ENCODE measurements at regions of chr22 and their contacts with region 1.

Region 1: GRCh38 chr22:45688606-45689080 is 17.0 kb downstream of the ATXN10 start:
- DNase-seq: peak; percentile 75
- H3K4me3 Mint-ChIP-seq: peak overlapping the region; percentile 24
- H3K27ac Mint-ChIP-seq: peak overlapping the region; percentile 85
- H3K4me1 Mint-ChIP-seq: peaks cover 66% of the 10 kb centered on the region
- H3K27me3 Mint-ChIP-seq: no peaks in the 10 kb centered on the region
- CTCF ChIP-seq: no peak

Region 2: DNA sequence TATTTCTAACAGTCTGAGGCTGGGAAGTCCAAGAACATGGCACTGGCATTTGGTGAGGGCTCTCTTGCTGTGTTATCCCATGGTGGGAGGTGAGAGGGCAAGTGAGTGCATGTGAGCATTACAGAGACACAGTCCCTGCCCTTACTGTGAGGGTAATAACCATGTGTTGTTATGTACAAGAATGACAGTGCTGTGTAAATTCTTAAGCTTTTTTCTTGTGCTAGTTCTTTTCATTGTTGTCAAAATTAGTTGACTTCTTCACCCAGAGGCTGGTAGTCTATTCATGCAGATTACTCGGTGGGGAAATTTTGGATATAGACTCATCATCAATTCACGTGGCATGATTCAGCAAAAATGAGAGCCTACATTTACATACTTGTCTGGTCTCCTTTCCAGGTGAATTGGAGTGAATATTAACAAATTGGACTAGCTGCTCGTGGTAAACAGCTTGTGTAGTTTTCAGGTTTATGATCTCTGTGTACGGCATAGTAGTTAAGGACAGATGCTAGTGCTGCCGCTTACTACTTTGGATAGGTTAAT is 32.3 kb after region 1 on chr22:
- CTCF ChIA-PET with region 1: no interaction called
- intact Hi-C with region 1: loop called (anchors 5 kb)
- DNase-seq: no peak
- H3K4me3 Mint-ChIP-seq: no peak overlapping the region
- H3K27ac Mint-ChIP-seq: no peak overlapping the region
- H3K4me1 Mint-ChIP-seq: peaks cover 66% of the 10 kb centered on the region
- H3K27me3 Mint-ChIP-seq: no peaks in the 10 kb centered on the region
- CTCF ChIP-seq: no peak

Region 3: DNA sequence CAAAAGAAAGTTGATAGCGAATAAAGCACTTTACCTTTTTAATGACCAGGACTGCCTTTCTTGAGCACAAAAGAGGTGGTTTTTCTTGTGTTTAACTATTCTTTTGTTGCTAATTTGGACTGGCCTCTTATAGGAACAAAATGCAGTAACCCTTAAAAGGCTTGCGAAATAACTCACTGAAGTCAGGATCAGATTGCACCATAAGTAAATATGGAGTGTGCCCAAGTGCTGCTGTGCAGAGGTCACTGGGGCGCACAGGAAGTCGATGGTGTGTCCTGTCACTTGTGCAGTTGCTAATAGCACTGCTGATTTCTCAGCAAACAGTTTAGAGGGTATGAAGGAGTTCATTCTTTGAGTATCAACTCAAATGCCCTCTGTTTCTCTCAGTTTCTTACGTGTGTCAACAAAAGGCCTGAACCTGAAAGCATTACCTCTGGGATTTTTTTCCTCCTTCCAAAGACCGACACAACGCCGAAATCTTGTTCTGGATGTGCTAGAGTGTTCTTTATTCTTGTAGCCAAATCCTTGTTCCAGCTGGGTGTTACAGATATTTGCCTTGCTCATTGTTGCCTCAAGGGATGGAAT is 54.3 kb after region 1 on chr22:
- CTCF ChIA-PET with region 1: no interaction called
- intact Hi-C with region 1: no loop called
- DNase-seq: peak; percentile 73
- H3K4me3 Mint-ChIP-seq: peak overlapping the region; percentile 44
- H3K27ac Mint-ChIP-seq: peak overlapping the region; percentile 76
- H3K4me1 Mint-ChIP-seq: peaks cover 71% of the 10 kb centered on the region
- H3K27me3 Mint-ChIP-seq: no peaks in the 10 kb centered on the region
- CTCF ChIP-seq: no peak

Region 4: DNA sequence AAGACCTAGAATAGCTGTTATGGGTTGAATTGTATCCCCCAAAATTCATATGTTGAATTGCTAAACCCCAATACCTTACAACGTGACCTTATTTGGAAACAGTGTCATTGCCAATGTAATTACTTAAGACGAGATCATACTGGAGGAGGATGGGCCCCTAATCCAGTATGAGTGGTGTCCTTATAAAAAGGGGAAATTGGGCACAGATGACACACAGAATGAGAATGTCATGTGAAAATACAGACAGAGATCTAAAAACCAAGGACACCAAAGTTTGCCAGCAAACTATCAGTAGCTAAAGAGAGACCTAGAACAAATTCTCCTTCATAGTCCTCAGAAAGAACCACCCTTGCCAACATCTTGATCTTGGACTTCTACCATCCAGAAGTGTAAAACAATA is 110.6 kb after region 1 on chr22:
- CTCF ChIA-PET with region 1: no interaction called
- intact Hi-C with region 1: loop called (anchors 5 kb)
- DNase-seq: no peak
- H3K4me3 Mint-ChIP-seq: no peak overlapping the region
- H3K27ac Mint-ChIP-seq: peak overlapping the region; percentile 96
- H3K4me1 Mint-ChIP-seq: peaks cover 76% of the 10 kb centered on the region
- H3K27me3 Mint-ChIP-seq: no peaks in the 10 kb centered on the region
- CTCF ChIP-seq: no peak